AG04449 (cell line): ENCODE measurements at regions of chr2 and their contacts with region 1.

Region 1: DNA sequence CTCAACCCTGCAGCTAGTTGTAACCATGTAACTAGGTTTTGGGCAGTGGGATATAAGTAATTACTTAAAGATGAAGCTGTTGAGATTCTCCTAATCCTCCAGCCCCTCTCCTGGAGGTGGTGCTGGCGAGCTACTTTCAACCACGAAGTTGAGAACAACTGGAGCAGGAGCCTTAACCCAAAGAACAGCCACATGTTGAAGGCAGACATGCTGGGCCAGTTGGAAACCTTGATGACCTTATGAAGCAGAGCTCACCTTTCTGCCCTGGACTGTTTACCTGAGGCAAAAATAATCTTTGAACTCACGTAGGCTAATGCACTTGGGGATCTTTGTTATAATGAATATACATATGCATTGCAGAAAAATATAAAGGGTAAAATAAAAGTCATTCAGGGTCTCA is 89.6 kb upstream of the NPAS2 start:
- DNase-seq: no peak
- H3K4me3 ChIP-seq: no peak overlapping the region
- CTCF ChIP-seq: peak; percentile 77

Region 2: DNA sequence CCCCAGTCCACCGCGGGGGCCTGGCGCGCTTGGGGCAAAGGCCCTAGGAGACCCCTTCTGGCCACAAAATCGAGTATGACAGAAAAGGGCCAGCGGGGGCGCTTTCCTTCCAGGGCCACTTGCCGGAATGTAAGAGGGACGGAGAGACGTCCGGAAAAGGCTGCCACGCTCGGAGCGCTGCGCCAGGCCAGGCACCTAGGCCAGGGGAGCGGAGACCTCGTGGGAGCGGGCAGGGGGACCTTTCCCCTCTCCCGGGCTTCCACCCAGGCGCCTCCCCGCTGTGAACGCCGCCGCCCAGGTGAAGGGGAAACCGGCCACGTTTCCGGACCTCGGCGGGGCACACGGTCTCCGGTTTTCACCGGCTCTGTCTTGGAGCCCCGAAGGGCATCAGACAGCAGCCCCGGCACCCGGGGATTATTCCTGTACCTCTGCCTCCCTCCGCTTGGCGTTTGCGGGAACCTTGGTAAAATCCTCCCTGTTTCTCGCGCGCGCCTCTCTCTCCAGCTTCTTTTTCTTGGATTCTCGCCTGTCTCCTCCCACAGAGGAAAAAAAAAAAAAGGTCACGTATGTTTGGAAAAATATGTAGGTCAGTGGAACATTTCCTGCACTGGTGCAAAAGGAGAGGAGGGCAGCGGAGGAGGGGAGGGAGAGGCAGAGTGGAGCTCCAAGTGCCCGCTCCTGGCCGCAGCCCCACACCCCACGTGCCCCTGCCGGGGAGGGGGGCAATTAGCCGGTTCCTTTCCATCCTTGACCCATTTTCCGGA is 88.4 kb after region 1 on chr2:
- CTCF ChIA-PET with region 1: interaction called, 13 read pairs
- POLR2A ChIA-PET with region 1: interaction called, 3 read pairs
- DNase-seq: no peak
- H3K4me3 ChIP-seq: peak overlapping the region; percentile 69
- CTCF ChIP-seq: peak; percentile 39

Region 3: GRCh38 chr2:100976645-100977391 is 246.5 kb after region 1 on chr2:
- CTCF ChIA-PET with region 1: interaction called, 33 read pairs
- POLR2A ChIA-PET with region 1: no interaction called
- DNase-seq: no peak
- H3K4me3 ChIP-seq: no peak overlapping the region
- CTCF ChIP-seq: no peak

Region 4: GRCh38 chr2:101001691-101002561 is 271.6 kb after region 1 on chr2 and contains the start of gene RPL31:
- CTCF ChIA-PET with region 1: interaction called, 47 read pairs
- POLR2A ChIA-PET with region 1: interaction called, 3 read pairs
- DNase-seq: peak; percentile 80
- H3K4me3 ChIP-seq: peak within 1 kb of the TSS; percentile 70
- CTCF ChIP-seq: no peak